CD4-positive, alpha-beta memory T cell (primary cell): ENCODE measurements at regions of chr3 and their contacts with region 1.

Region 1: GRCh38 chr3:15268033-15268631 is 62.1 kb downstream of the CAPN7 start:
- DNase-seq: peak; percentile 82 to 85 (median 83)
- H3K4me3 ChIP-seq: no peak overlapping the region
- H3K4me3 Mint-ChIP-seq: peak overlapping the region in 7 of 8 donors; percentile 24 to 86 (median 60)
- H3K27ac ChIP-seq: peak overlapping the region; percentile 65
- H3K27ac Mint-ChIP-seq: peak overlapping the region; percentile 35 to 96 (median 87)
- H3K4me1 ChIP-seq: peaks cover 88% of the 10 kb centered on the region
- H3K4me1 Mint-ChIP-seq: peaks cover 50 to 93% (median 77%) of the 10 kb centered on the region in 4 donors
- H3K27me3 ChIP-seq: no peaks in the 10 kb centered on the region
- H3K27me3 Mint-ChIP-seq: no peaks in the 10 kb centered on the region

Region 2: DNA sequence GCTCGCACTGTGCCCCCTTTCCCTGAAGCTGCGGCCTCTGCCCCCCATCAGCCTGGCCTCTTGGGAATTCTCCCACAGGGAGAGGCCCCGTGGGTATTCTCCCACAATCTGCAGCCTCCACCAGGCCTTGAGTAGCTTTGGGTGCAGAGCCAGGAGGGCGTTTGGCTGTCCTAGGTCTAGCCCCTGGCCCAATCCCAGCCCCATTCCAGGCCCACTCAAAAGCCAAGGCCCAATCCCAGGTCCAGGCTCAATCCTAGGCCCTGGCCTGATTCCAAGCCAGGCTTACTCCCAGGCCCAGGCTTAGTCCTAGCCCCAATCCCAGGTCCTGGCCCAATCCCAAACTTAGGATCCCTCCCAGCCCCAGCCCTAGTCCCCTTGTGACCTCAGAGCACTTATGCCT is 1203.2 kb before region 1 on chr3:
- CTCF ChIA-PET with region 1: no interaction called
- POLR2A ChIA-PET with region 1: no interaction called
- intact Hi-C with region 1: no loop called
- DNase-seq: no peak
- H3K4me3 ChIP-seq: no peak overlapping the region
- H3K4me3 Mint-ChIP-seq: no peak overlapping the region
- H3K27ac ChIP-seq: no peak overlapping the region
- H3K27ac Mint-ChIP-seq: no peak overlapping the region
- H3K4me1 ChIP-seq: no peaks in the 10 kb centered on the region
- H3K4me1 Mint-ChIP-seq: no peaks in the 10 kb centered on the region
- H3K27me3 ChIP-seq: no peaks in the 10 kb centered on the region
- H3K27me3 Mint-ChIP-seq: peaks cover 3 to 7% of the 10 kb centered on the region in 2 donors

Region 3: DNA sequence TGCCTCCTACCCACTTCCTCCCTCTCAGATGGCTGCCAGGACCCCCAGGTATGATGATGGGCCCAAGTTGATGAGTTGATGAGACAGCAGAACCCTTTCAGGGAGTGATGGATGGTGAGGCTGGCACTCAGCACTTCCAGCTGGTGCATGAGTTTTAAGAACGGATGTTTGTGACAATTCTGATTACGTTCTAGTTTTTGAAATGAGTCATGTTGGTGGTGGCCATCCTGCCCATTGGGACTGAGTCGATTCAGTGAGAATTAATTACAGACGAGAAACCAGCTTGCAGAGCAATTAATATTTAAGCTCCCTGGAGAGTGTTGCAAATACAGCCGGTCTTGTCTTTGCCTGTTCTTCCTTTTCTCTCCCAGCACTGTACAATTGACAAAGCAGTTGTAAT is 377.7 kb before region 1 on chr3:
- CTCF ChIA-PET with region 1: no interaction called
- POLR2A ChIA-PET with region 1: no interaction called
- intact Hi-C with region 1: no loop called
- DNase-seq: peak in 2 of 5 donors; percentile 14 to 24
- H3K4me3 ChIP-seq: no peak overlapping the region
- H3K4me3 Mint-ChIP-seq: peak overlapping the region in 5 of 8 donors; percentile 23 to 57 (median 29)
- H3K27ac ChIP-seq: no peak overlapping the region
- H3K27ac Mint-ChIP-seq: peak overlapping the region in 4 of 7 donors; percentile 23 to 59 (median 32)
- H3K4me1 ChIP-seq: peaks cover 22% of the 10 kb centered on the region
- H3K4me1 Mint-ChIP-seq: peaks cover 21 to 42% (median 31%) of the 10 kb centered on the region in 4 donors
- H3K27me3 ChIP-seq: no peaks in the 10 kb centered on the region
- H3K27me3 Mint-ChIP-seq: peaks cover 1 to 3% of the 10 kb centered on the region in 2 donors

Region 4: DNA sequence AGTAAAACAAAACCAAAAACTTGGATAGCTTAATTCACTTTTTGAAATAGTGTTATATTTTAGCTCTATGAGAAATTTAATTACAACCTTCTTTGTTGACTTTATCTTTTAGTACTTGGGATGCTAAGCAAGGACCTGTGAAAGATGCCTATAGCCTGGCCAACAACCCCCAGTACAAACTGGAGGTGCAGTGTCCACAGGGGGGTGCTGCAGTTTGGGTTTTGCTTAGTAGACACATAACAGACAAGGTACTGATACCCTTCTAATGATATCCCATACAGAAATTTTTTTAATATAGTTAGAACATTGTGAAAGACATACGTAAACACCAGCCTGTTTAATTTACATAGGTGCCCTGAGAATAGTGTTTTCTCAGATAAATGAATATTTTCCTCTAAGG is 26.8 kb before region 1 on chr3:
- CTCF ChIA-PET with region 1: interaction called, 21 read pairs
- POLR2A ChIA-PET with region 1: interaction called, 3 read pairs
- intact Hi-C with region 1: no loop called
- DNase-seq: peak; percentile 36 to 51 (median 44)
- H3K4me3 ChIP-seq: no peak overlapping the region
- H3K4me3 Mint-ChIP-seq: no peak overlapping the region
- H3K27ac ChIP-seq: no peak overlapping the region
- H3K27ac Mint-ChIP-seq: peak overlapping the region in 1 of 7 donors; percentile 73
- H3K4me1 ChIP-seq: no peaks in the 10 kb centered on the region
- H3K4me1 Mint-ChIP-seq: peaks cover 0 to 9% (median 4%) of the 10 kb centered on the region in 4 donors
- H3K27me3 ChIP-seq: no peaks in the 10 kb centered on the region
- H3K27me3 Mint-ChIP-seq: no peaks in the 10 kb centered on the region

Region 5: GRCh38 chr3:15300323-15301078 is 32.4 kb after region 1 on chr3:
- CTCF ChIA-PET with region 1: interaction called, 25 read pairs
- POLR2A ChIA-PET with region 1: interaction called, 14 read pairs
- intact Hi-C with region 1: no loop called
- DNase-seq: no peak
- H3K4me3 ChIP-seq: peak overlapping the region in 1 of 2 donors; percentile 3
- H3K4me3 Mint-ChIP-seq: peak overlapping the region in 6 of 8 donors; percentile 51 to 78 (median 74)
- H3K27ac ChIP-seq: no peak overlapping the region
- H3K27ac Mint-ChIP-seq: peak overlapping the region; percentile 70 to 88 (median 77)
- H3K4me1 ChIP-seq: peaks cover 95% of the 10 kb centered on the region
- H3K4me1 Mint-ChIP-seq: peaks cover 60 to 97% (median 80%) of the 10 kb centered on the region in 4 donors
- H3K27me3 ChIP-seq: no peaks in the 10 kb centered on the region
- H3K27me3 Mint-ChIP-seq: no peaks in the 10 kb centered on the region

Region 6: DNA sequence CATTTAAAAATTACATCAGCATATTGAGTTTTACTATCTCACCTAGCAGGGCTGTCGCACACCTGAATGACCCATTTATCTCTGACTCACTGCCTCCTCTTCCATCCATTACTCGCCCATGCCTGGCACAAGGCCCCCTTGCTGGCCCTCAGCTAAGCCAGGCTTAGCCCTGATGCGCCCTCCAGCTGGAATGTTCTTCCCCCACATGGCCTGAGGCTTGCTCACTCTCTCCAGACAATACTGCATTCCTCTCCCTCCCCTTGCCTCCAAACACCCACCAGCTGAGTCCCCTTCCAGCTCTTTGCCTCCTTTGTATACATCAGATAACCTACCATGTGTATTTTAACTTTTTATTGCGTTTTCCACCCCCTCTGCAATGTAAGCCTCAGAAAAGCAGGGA is 57.1 kb after region 1 on chr3:
- CTCF ChIA-PET with region 1: interaction called, 105 read pairs
- POLR2A ChIA-PET with region 1: interaction called, 60 read pairs
- intact Hi-C with region 1: no loop called
- DNase-seq: no peak
- H3K4me3 ChIP-seq: no peak overlapping the region
- H3K4me3 Mint-ChIP-seq: peak overlapping the region in 4 of 8 donors; percentile 17 to 64 (median 30)
- H3K27ac ChIP-seq: no peak overlapping the region
- H3K27ac Mint-ChIP-seq: peak overlapping the region in 6 of 7 donors; percentile 10 to 80 (median 62)
- H3K4me1 ChIP-seq: peaks cover 89% of the 10 kb centered on the region
- H3K4me1 Mint-ChIP-seq: peaks cover 66 to 96% (median 79%) of the 10 kb centered on the region in 4 donors
- H3K27me3 ChIP-seq: no peaks in the 10 kb centered on the region
- H3K27me3 Mint-ChIP-seq: no peaks in the 10 kb centered on the region

Region 7: DNA sequence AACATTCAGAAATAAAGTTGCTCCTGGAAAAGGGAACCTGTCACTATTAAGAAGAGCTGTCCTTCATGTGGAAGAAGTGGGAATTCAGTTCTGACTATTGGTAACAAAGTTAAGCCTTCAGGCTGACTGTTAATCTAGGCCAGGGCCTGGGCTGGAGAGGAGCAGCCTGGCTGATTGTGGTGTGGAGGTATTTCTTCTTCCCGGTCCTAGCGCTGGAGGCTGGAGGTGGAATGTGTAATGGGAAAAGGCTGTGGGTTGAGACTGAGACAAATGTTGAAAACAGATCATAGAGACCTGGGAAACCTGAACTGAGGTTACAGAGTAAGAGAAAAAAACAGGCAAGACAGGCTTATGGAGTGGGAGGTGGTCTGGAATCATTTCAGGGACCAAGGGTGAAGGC is 88.1 kb after region 1 on chr3:
- CTCF ChIA-PET with region 1: interaction called, 41 read pairs
- POLR2A ChIA-PET with region 1: interaction called, 7 read pairs
- intact Hi-C with region 1: no loop called
- DNase-seq: no peak
- H3K4me3 ChIP-seq: peak overlapping the region in 1 of 2 donors; percentile 49
- H3K4me3 Mint-ChIP-seq: peak overlapping the region; percentile 62 to 91 (median 80)
- H3K27ac ChIP-seq: peak overlapping the region; percentile 72
- H3K27ac Mint-ChIP-seq: peak overlapping the region; percentile 90 to 99 (median 97)
- H3K4me1 ChIP-seq: peaks cover 67% of the 10 kb centered on the region
- H3K4me1 Mint-ChIP-seq: peaks cover 30 to 58% (median 46%) of the 10 kb centered on the region in 4 donors
- H3K27me3 ChIP-seq: no peaks in the 10 kb centered on the region
- H3K27me3 Mint-ChIP-seq: no peaks in the 10 kb centered on the region

Region 8: DNA sequence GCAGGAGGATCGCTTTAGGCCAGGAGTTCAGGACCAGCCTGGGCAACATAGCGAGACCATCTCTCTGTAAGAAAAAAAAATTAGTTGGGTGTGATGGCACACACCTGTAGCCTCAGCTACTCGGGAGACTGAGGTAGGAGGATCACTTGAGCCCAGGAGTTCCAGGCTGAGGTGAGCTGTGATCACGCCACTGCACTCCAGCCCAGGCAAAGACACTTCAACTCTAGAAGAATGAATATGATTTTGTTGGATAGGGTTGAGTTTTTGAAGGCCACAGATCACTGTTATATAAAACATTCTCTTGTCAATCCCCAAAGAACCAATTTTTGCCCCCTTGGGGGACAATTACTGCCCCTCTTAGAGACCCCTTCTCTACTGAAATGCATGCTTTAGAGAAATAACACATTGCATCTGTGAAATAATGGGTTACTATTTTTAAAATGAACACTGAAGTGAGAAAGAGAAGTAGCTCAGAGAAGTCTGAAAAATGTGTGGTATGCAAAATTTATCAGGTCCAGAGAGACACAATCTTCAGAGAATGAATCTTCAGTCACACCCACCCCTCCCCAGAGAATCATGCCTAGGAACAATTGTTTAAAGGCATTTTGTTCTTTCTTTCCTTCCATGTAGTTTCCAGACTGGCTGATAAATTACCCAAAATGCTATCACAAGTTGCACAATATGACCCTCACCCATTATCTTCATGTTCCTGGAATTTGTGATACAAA is 116.5 kb after region 1 on chr3:
- CTCF ChIA-PET with region 1: interaction called, 224 read pairs
- POLR2A ChIA-PET with region 1: interaction called, 19 read pairs
- intact Hi-C with region 1: no loop called
- DNase-seq: no peak
- H3K4me3 ChIP-seq: no peak overlapping the region
- H3K4me3 Mint-ChIP-seq: no peak overlapping the region
- H3K27ac ChIP-seq: no peak overlapping the region
- H3K27ac Mint-ChIP-seq: peak overlapping the region in 2 of 7 donors; percentile 37
- H3K4me1 ChIP-seq: no peaks in the 10 kb centered on the region
- H3K4me1 Mint-ChIP-seq: peaks cover 0 to 7% (median 3%) of the 10 kb centered on the region in 4 donors
- H3K27me3 ChIP-seq: no peaks in the 10 kb centered on the region
- H3K27me3 Mint-ChIP-seq: no peaks in the 10 kb centered on the region

Region 9: DNA sequence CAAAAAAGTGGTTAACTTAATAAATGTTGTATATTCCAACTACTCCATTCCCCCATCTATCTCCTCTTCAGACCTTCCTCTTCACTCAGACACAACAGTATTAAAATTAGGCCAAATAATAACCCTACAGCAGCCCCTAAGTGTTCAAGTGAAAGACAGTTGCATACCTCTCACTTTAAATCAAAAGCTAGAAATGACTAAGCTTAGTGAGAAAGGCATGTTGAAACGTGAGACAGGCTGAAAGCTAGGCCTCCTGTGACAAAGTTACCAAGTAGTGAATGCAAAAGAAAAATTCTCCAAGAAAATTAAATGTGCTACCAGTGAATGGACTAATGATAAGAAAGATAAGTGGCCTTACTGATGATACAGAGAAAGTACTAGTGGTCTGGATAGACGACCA is 457.9 kb after region 1 on chr3:
- CTCF ChIA-PET with region 1: no interaction called
- POLR2A ChIA-PET with region 1: no interaction called
- intact Hi-C with region 1: no loop called
- DNase-seq: no peak
- H3K4me3 ChIP-seq: no peak overlapping the region
- H3K4me3 Mint-ChIP-seq: no peak overlapping the region
- H3K27ac ChIP-seq: no peak overlapping the region
- H3K27ac Mint-ChIP-seq: peak overlapping the region in 3 of 7 donors; percentile 44 to 61 (median 51)
- H3K4me1 ChIP-seq: no peaks in the 10 kb centered on the region
- H3K4me1 Mint-ChIP-seq: peaks cover 3 to 13% (median 9%) of the 10 kb centered on the region in 4 donors
- H3K27me3 ChIP-seq: no peaks in the 10 kb centered on the region
- H3K27me3 Mint-ChIP-seq: no peaks in the 10 kb centered on the region